Activated naive CD4-positive, alpha-beta T cell treated with anti-CD3 and anti-CD28 coated beads for 36 hours (primary cell): ENCODE measurements at regions of chr6 and their contacts with region 1.

Region 1: DNA sequence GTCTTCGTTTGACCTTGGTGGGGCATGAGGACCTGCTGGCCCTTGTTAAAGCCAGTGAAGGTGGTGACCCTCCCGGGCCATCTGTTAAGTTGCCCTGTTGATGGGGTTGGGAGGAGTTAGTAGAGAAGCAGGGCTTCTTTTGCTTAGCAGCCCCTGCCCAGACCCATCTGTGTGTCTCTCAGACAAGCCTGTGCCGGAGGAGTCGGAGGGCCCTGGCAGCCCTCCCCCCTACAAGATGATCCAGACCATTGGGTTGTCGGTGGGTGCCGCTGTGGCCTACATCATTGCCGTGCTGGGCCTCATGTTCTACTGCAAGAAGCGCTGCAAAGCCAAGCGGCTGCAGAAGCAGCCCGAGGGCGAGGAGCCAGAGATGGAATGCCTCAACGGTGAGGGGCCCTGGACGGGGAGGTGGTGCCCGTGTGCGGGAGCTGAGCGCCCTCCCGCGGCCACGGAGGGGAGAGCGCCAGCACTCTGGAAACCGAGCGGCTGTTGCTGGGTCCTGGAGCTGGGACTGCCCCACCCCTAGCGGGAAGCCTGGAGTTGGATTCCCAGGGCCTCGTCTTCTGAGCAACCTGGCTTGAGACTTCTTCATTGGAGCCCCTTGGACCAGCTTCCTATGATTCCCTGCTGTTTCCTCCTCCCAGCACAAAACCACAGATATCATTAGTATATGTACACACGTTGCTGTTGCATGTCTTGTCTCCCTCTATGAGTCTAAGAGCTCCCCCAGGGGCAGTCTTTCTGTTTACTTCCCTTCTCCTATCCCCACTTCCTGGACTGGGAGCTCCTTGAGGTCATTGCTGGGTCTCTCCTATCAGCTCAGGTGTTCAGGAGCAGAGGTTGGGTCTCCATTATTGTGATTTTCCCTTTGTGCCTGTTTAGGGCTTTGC is 27.6 kb upstream of the SRF start:
- DNase-seq: peak; percentile 83
- H3K4me3 Mint-ChIP-seq: no peak overlapping the region
- H3K27ac Mint-ChIP-seq: no peak overlapping the region
- H3K4me1 Mint-ChIP-seq: peaks cover 16% of the 10 kb centered on the region
- H3K27me3 Mint-ChIP-seq: no peaks in the 10 kb centered on the region

Region 2: DNA sequence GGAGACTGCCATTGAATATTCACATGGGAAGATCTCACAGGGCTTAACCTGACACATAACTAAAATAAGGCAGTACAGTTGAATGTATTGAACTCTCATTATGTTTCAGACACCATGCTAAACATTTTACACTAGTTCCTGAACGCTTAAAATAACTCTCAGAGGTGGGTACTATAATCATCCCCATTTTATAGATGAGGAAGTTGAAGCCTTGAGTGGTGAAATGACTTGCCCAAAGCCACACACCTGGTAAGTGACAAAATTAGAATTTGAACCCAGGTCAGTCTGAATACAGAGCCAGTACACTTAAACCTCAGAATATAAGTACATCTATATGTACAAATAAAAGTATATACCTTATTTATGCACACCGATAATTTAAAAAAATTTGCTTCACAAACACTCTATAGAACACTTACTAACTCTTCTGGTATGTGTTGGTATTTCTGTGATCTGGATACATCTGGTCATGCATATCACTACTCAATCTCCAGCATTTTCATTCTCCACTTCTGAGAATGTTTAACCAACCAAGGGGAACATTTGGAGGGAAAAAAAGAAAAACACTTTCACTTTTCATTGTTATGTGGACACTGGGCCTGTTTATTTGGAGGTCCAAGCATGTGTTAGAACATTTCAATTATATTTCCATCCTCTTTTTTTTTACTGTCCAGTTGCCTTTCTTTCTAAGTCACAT is 366.2 kb before region 1 on chr6:
- CTCF ChIA-PET with region 1: no interaction called
- intact Hi-C with region 1: no loop called
- DNase-seq: no peak
- H3K4me3 Mint-ChIP-seq: no peak overlapping the region
- H3K27ac Mint-ChIP-seq: peak overlapping the region; percentile 50
- H3K4me1 Mint-ChIP-seq: peaks cover 68% of the 10 kb centered on the region
- H3K27me3 Mint-ChIP-seq: no peaks in the 10 kb centered on the region

Region 3: DNA sequence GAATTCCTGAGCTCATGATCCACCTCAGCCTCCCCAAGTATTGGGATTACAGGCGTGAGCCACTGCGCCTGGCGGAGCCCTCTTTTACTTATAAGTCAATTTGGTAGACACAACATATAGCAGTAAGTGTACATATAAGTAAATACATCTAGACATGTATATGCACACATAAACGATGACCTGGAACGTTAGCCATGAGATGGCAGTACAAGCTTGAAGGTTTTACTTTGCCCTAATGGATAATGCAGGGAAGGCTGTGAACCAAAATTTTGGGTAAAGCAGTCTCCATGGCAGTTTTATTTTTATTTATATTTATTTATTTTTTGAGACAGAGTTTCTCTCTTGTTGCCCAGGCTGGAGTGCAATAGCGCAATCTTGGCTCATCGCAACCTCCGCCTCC is 185.4 kb before region 1 on chr6:
- CTCF ChIA-PET with region 1: interaction called, 6 read pairs
- intact Hi-C with region 1: loop called (anchors 2 kb)
- DNase-seq: no peak
- H3K4me3 Mint-ChIP-seq: no peak overlapping the region
- H3K27ac Mint-ChIP-seq: no peak overlapping the region
- H3K4me1 Mint-ChIP-seq: peaks cover 20% of the 10 kb centered on the region
- H3K27me3 Mint-ChIP-seq: no peaks in the 10 kb centered on the region

Region 4: DNA sequence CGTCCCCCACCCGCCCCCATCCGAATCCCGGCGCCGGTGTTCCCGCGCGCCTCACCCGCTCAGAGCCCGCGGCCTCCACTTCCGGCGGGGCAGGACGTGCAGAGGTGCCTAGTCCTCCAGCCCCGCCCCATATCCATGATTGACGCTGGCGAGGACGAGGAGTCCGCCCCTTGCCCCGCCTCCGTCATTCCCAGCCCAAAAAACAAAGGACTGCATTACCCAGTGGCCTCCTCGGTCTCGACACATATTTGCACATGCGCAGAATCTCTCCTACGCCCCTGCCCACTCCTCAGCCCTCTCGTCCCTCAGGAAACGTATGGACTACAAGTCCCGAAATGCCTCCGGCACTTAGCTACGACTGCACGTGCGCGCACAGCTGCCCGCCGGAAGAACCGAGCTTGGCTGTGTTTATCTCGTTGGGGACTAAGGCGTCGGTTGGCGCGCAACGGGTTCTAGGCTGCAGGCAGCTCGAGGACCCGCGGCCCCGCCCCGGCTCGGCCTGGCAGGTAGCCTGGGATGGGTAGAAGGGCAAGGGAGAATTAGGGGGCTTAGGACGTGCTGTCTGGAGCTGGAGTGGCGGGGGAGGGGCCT is 129.5 kb before region 1 on chr6 and contains the starts of genes KLHDC3 and MEA1:
- CTCF ChIA-PET with region 1: interaction called, 9 read pairs
- intact Hi-C with region 1: loop called (anchors 1 kb)
- DNase-seq: peak; percentile 100
- H3K4me3 Mint-ChIP-seq: peak within 1 kb of the TSS; percentile 95
- H3K27ac Mint-ChIP-seq: peak within 1 kb of the TSS; percentile 88
- H3K4me1 Mint-ChIP-seq: peaks cover 53% of the 10 kb centered on the region
- H3K27me3 Mint-ChIP-seq: no peaks in the 10 kb centered on the region
- total RNA-seq, gene KLHDC3: 58.6 to 58.9 TPM
- total RNA-seq, gene MEA1: 80.6 to 85.1 TPM

Region 5: GRCh38 chr6:43053545-43054205 is 89.8 kb before region 1 on chr6 and contains the start of gene CUL7:
- CTCF ChIA-PET with region 1: interaction called, 17 read pairs
- intact Hi-C with region 1: no loop called
- DNase-seq: peak; percentile 96
- H3K4me3 Mint-ChIP-seq: peak within 1 kb of the TSS; percentile 99
- H3K27ac Mint-ChIP-seq: peak within 1 kb of the TSS; percentile 90
- H3K4me1 Mint-ChIP-seq: peaks cover 39% of the 10 kb centered on the region
- H3K27me3 Mint-ChIP-seq: no peaks in the 10 kb centered on the region
- total RNA-seq, gene CUL7: 21.9 to 22.1 TPM

Region 6: DNA sequence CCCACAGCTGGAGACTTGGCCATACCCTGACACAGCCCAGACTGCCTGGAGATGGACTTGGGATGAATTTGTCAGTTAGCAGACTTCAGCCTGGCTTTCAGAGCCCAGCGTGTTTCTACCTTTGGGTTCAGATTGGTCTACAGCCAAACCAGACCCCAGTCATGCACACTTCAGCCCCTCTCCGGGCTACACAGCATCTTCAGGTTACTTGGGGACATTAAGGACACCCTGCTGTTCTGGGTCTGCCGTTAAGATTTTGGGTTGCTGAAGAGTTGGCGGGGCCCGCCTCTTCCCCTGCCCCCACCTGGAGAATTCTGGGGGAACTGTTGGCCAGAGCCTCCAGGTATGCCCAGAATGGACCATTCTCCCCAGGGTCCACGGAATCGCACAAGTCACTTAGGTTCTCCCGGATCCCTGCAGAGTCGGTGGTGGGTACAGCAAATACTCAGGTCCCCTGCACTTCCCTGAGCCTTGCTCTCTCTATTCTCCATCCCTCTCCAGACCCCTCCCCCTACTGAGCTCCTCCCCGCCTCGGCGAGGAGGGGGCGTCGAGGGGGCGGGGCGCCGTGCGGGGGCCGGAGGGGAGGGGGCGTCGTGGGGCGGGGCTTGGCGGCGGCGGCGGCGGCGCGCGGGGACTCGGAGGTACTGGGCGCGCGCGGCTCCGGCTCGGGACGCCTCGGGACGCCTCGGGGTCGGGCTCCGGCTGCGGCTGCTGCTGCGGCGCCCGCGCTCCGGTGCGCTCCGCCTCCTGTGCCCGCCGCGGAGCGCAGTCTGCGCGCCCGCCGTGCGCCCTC is 67.6 kb before region 1 on chr6 and contains the start of gene PTK7:
- CTCF ChIA-PET with region 1: interaction called, 16 read pairs
- intact Hi-C with region 1: no loop called
- DNase-seq: peak; percentile 33
- H3K4me3 Mint-ChIP-seq: peak within 1 kb of the TSS; percentile 65
- H3K27ac Mint-ChIP-seq: no peak within 1 kb of the TSS
- H3K4me1 Mint-ChIP-seq: peaks cover 7% of the 10 kb centered on the region
- H3K27me3 Mint-ChIP-seq: peaks cover 14% of the 10 kb centered on the region
- total RNA-seq, gene PTK7: 2.0 to 2.2 TPM